ENCODE measurements at regions of chr12 and their contacts with region 1.

Region 1: GRCh38 chr12:120361506-120362208 is 7.3 kb downstream of the MSI1 start:
- DNase-seq: peak in 4 of 9 experiments; percentile 20 to 57 (median 46)
- ATAC-seq: peak; percentile 54
- H3K4me3 ChIP-seq: no peak overlapping the region
- H3K4me3 Mint-ChIP-seq: no peak overlapping the region
- H3K27ac ChIP-seq: no peak overlapping the region
- H3K27ac Mint-ChIP-seq: no peak overlapping the region
- H3K4me1 ChIP-seq: no peaks in the 10 kb centered on the region
- H3K4me1 Mint-ChIP-seq: peaks cover 2% of the 10 kb centered on the region
- H3K27me3 ChIP-seq: peaks cover 4 to 5% of the 10 kb centered on the region in 2 experiments
- H3K27me3 Mint-ChIP-seq: peaks cover 57% of the 10 kb centered on the region
- CTCF ChIP-seq: no peak

Region 2: DNA sequence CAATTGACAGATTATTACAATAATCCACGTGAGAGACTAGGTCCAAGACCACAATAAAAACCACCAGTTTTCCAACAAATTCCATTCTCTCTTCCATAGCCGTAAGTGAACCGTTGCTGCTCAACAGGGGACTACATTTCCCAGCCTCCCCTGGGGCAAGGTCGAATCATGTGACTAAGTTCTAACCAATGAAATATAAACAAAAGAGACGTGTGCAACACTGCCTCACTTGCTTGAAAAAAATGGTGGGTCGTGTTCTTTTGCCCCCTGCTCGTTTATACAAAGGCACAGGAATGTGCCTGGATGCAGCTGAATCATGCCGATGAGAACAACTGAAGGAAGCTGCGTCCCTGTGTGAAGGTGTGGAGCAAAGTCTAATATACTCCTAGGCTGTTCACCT is 1131.8 kb before region 1 on chr12:
- CTCF ChIA-PET with region 1: no interaction called
- POLR2A ChIA-PET with region 1: no interaction called
- intact Hi-C with region 1: no loop called
- DNase-seq: no peak
- ATAC-seq: no peak
- H3K4me3 ChIP-seq: no peak overlapping the region
- H3K4me3 Mint-ChIP-seq: no peak overlapping the region
- H3K27ac ChIP-seq: no peak overlapping the region
- H3K27ac Mint-ChIP-seq: no peak overlapping the region
- H3K4me1 ChIP-seq: no peaks in the 10 kb centered on the region
- H3K4me1 Mint-ChIP-seq: no peaks in the 10 kb centered on the region
- H3K27me3 ChIP-seq: no peaks in the 10 kb centered on the region
- H3K27me3 Mint-ChIP-seq: peaks cover 12% of the 10 kb centered on the region
- CTCF ChIP-seq: no peak

Region 3: DNA sequence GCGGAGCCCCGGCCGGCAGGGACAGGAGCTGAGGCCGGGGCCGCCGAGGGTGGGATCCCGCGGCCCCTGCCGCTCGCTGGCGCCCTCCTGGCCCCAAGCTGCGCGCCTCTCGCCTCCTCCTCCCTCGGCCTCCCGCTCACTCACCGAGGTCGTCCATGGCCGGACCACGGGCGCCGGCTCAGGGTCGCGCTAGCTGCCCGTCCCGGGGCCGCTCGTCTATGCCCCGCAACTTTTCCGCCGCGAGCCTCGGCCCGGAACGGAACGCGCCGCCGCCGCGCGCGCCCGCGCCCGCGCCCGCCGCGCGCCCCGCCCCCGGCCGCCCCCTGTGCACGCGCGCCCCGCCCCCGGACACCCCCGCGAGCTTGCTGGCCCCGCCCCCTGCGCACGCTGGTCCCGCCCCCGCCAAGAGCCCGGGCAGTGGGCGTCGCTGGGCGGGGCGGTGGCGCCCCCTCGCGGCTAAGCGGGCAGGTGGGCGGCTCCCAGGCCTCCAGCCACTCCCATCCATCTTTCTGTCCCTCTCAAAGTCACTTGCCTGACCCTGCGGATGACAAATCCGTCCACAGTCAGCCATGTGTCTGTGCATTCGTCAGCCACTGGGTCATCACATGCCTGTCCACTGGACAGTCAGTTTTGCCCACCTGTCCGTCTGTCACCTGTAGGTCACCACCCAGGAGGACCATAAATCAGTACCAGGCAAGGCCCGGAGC is 96.0 kb before region 1 on chr12 and contains the start of gene PXN:
- CTCF ChIA-PET with region 1: no interaction called
- POLR2A ChIA-PET with region 1: no interaction called
- intact Hi-C with region 1: no loop called
- DNase-seq: peak; percentile 80 to 97 (median 93)
- ATAC-seq: peak; percentile 90
- H3K4me3 ChIP-seq: peak within 1 kb of the TSS; percentile 77 to 94
- H3K4me3 Mint-ChIP-seq: peak within 1 kb of the TSS; percentile 97
- H3K27ac ChIP-seq: peak within 1 kb of the TSS; percentile 69 to 71
- H3K27ac Mint-ChIP-seq: peak within 1 kb of the TSS; percentile 95
- H3K4me1 ChIP-seq: peaks cover 40% of the 10 kb centered on the region
- H3K4me1 Mint-ChIP-seq: peaks cover 45% of the 10 kb centered on the region
- H3K27me3 ChIP-seq: no peaks in the 10 kb centered on the region
- H3K27me3 Mint-ChIP-seq: no peaks in the 10 kb centered on the region
- CTCF ChIP-seq: peak; percentile 73
- total RNA-seq, gene PXN: 170 to 171 TPM

Region 4: GRCh38 chr12:120413901-120414695 is 52.4 kb after region 1 on chr12:
- CTCF ChIA-PET with region 1: interaction called, 4 read pairs
- POLR2A ChIA-PET with region 1: no interaction called
- intact Hi-C with region 1: loop called in 1 of 2 experiments (anchors 5 kb)
- DNase-seq: no peak
- ATAC-seq: no peak
- H3K4me3 ChIP-seq: no peak overlapping the region
- H3K4me3 Mint-ChIP-seq: no peak overlapping the region
- H3K27ac ChIP-seq: no peak overlapping the region
- H3K27ac Mint-ChIP-seq: no peak overlapping the region
- H3K4me1 ChIP-seq: no peaks in the 10 kb centered on the region
- H3K4me1 Mint-ChIP-seq: no peaks in the 10 kb centered on the region
- H3K27me3 ChIP-seq: no peaks in the 10 kb centered on the region
- H3K27me3 Mint-ChIP-seq: peaks cover 2% of the 10 kb centered on the region
- CTCF ChIP-seq: no peak

Measured in CD8-positive, alpha-beta T cell (primary cell).